Psoas muscle (tissue), 8 donors: ENCODE measurements at regions of chr7 and their contacts with region 1.

Region 1: DNA sequence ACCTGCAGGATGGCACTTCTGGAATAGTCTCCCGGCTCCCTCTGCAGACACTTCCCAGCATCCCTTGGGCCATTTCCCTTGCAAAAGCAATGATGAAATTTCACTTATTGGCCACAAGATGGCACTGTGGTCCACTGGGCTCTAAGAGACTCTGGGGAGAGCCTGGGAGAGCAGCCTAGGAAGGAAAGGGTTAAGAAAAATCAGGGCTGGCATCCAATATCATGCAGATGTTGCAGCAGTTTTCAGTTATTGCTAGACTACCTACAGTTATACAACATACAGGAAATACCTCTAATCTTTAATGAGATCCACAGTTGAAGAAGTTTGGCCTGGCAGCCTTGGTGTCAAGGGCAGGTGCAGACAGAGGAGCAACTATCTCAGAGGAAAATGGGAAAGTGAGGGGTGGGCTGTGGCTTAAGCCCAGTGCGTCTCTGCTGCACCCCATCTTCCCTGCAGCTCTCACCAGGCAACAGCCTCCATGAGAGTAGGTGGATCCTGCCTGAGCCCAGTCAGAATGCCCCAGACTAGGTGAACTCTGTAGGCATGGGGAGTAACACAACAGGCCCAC is 100.2 kb upstream of the PRSS58 start:
- DNase-seq: no peak
- ATAC-seq: peak; percentile 77 to 94 (median 84)
- H3K4me3 ChIP-seq: no peak overlapping the region
- H3K27ac ChIP-seq: no peak overlapping the region
- H3K4me1 ChIP-seq: peaks cover 5% of the 10 kb centered on the region
- H3K27me3 ChIP-seq: no peaks in the 10 kb centered on the region
- CTCF ChIP-seq: peak; percentile 73

Region 2: DNA sequence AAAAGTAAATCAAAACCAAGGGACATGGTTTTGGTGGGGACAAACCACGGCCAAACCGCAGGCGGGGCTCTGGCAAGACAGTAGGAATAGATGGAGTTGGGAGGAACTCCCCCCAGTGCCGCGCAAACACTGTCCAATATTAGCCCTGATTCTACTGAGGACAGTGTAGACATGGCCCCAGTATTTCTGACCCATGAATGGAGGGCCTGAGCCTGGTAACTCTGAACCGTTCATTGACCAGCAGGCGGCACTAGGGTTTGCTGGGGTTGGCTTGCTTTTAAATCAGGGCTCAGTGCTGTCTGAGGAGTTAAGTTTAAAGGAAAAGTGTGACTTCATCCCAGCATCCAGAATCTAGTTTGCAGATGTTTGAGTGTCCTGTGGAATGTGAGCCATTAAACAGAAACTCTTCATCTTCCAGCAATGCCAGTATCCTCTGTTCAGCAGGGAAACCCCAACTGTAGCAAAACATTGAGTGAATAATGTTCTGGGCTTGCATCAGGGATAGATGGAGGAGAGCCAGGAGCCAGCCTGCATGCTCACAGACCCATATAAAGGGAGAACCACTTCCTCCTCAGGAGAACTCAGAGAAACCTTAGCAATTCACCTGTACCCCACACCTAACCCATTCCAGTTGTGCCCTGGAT is 47.2 kb after region 1 on chr7:
- intact Hi-C with region 1: loop called in 1 of 2 experiments (anchors 10 kb)
- DNase-seq: no peak
- ATAC-seq: no peak
- H3K4me3 ChIP-seq: no peak overlapping the region
- H3K27ac ChIP-seq: no peak overlapping the region
- H3K4me1 ChIP-seq: no peaks in the 10 kb centered on the region
- H3K27me3 ChIP-seq: no peaks in the 10 kb centered on the region
- CTCF ChIP-seq: no peak

Region 3: DNA sequence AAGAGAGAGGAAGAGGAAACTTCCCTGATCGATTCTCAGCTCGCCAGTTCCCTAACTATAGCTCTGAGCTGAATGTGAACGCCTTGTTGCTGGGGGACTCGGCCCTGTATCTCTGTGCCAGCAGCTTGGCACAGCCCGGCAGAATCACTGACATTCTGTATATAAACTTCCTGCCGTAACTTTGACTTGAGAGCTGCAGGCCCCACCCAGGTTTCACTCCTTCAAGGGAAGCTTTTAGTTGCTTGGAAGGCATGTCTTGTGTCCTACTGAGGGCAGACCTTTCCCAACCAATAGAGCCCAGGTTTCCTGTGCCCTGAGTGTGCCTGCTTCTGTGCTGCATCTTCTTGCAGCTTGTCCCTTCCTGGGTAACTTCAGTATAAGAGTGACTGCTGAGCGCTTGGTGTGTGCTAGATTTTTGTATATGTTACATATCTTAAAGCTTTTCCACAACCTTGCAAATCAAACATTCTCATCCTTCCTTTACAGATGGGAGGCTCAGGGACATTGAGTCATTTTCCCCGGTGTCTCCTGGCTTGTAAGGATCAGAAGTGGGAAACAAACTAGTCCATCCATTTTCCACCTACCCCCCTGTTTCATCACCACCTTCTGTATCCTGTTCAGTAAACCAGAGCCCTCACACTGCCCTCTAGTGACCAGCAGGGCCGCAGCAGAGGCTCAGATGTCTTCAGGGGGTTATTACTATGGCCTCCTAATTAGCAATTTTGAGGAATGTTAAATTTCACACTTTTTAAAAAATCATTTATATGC is 125.0 kb after region 1 on chr7:
- intact Hi-C with region 1: loop called in 1 of 2 experiments (anchors 10 kb)
- DNase-seq: peak; percentile 32 to 62
- ATAC-seq: peak; percentile 52 to 83 (median 78)
- H3K4me3 ChIP-seq: no peak overlapping the region
- H3K27ac ChIP-seq: no peak overlapping the region
- H3K4me1 ChIP-seq: peaks cover 3% of the 10 kb centered on the region
- H3K27me3 ChIP-seq: no peaks in the 10 kb centered on the region
- CTCF ChIP-seq: peak; percentile 70